Panc1 (cell line): ENCODE measurements at regions of chr17 and their contacts with region 1.

Region 1: DNA sequence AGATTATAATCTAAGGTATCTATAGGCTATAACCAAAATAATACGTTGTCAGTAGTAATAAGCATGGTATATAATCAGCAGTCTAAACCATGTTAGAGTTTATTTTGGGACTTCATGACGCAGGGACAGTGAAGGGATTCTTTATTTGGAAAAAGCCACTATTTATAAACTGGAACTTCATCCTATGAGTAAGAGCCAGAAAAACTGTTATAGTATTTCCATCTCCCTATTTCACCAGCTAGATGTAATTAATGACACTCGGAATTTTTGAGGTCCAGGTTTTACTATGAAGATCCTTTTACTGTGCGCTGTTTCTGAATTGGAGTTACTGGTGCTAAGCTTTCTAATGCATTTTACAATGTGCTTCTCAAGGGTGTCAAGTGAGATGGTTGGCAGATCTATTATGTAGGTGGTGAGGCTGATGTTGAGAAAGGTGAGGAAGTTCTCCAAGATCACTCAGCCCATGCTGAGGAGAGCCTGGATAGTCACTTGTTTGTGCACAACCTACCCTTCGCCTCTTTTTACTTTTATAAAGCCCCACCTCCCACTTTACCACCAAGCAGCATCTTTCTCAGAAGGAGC is 149.3 kb downstream of the MSI2 start:
- DNase-seq: no peak
- ATAC-seq: no peak
- H3K4me3 ChIP-seq: no peak overlapping the region
- H3K27ac ChIP-seq: no peak overlapping the region
- H3K4me1 ChIP-seq: peaks cover 6% of the 10 kb centered on the region; the same call in 1 of the 2 replicates
- H3K27me3 ChIP-seq: no peaks in the 10 kb centered on the region
- CTCF ChIP-seq: no peak

Region 2: DNA sequence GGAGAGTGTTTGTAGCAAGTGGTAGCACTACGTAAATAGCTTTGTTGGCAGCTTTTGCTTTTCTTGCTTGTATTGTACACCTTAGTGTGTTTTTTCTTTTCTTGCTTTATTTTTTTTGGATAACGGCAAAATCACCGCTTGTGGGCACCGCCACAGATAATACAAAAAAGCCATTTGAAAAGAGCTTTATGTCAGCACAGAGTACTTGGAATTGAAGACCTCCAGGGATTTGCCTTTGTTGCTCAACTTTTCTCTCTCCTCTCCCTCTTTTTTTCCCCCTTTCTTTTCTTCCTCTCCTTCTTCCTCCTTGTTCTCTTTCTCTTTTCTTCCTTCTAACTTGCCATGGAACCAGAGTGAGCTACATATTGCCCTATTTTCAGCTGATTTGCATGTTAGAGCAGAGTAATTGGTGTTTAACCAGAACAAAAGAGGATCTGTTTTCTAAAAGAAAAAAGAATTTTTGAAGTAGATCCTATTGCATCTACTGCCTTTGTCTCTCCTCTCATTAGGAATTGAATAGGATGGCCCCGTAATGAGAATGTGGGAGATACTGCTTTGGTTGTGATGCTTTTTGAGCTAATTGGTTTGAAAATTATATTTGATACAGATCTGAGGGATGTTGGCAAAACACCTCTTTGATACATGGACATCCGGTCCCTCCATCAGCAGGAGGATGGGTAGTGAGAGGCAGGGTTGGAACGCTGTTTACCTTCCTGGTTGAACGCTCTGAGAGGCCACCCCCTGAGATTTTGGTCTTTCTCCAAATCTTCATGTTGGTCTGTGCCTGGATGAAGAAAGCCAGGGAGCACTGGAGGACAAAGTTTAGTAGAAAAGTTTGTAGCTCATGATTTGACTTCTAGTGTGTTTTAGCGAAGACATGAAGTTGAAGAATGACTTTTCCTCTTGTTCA is 63.7 kb before region 1 on chr17:
- CTCF ChIA-PET with region 1: no interaction called
- POLR2A ChIA-PET with region 1: no interaction called
- in situ Hi-C with region 1: no loop called
- intact Hi-C with region 1: no loop called
- DNase-seq: no peak
- ATAC-seq: no peak
- H3K4me3 ChIP-seq: no peak overlapping the region
- H3K27ac ChIP-seq: no peak overlapping the region
- H3K4me1 ChIP-seq: no peaks in the 10 kb centered on the region
- H3K27me3 ChIP-seq: no peaks in the 10 kb centered on the region
- CTCF ChIP-seq: no peak

Region 3: DNA sequence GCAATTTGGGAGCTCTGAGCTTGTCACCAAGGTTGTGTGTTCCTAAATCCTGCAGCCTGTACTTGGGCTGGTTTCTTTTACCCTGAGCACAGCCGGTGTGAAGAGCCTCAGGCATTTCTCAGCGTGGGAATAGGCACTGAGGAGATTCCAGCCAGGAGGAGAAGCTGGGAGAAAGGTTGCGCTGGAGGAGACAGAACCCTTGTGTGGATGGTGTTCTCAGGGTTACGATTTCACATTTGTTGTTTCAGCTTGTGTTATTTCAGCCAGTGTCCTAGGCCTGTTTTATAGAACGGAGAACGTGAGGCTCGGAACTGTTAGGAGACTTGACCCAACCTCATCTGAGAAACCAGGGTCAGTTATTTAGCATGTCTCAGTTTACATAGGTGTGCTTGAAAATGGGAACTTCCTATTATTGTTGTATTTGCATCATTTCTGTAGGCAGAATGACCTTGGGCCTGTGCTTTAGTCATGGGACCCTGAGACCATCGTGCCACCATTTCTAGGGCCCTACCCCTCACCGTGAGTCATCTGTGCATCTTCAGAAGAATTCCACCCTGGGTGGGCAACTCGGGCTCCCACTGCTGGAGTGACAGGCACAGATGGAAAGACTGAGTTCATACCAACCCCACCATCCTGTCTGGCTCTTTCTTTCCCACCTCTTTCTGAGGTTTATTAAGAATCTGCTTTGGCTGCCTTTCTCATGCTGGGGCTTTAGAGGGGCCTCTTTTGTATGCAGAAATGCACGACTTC is 14.3 kb before region 1 on chr17:
- CTCF ChIA-PET with region 1: no interaction called
- POLR2A ChIA-PET with region 1: no interaction called
- in situ Hi-C with region 1: no loop called
- intact Hi-C with region 1: no loop called
- DNase-seq: no peak
- ATAC-seq: no peak
- H3K4me3 ChIP-seq: no peak overlapping the region
- H3K27ac ChIP-seq: no peak overlapping the region
- H3K4me1 ChIP-seq: no peaks in the 10 kb centered on the region
- H3K27me3 ChIP-seq: no peaks in the 10 kb centered on the region
- CTCF ChIP-seq: no peak

Region 4: DNA sequence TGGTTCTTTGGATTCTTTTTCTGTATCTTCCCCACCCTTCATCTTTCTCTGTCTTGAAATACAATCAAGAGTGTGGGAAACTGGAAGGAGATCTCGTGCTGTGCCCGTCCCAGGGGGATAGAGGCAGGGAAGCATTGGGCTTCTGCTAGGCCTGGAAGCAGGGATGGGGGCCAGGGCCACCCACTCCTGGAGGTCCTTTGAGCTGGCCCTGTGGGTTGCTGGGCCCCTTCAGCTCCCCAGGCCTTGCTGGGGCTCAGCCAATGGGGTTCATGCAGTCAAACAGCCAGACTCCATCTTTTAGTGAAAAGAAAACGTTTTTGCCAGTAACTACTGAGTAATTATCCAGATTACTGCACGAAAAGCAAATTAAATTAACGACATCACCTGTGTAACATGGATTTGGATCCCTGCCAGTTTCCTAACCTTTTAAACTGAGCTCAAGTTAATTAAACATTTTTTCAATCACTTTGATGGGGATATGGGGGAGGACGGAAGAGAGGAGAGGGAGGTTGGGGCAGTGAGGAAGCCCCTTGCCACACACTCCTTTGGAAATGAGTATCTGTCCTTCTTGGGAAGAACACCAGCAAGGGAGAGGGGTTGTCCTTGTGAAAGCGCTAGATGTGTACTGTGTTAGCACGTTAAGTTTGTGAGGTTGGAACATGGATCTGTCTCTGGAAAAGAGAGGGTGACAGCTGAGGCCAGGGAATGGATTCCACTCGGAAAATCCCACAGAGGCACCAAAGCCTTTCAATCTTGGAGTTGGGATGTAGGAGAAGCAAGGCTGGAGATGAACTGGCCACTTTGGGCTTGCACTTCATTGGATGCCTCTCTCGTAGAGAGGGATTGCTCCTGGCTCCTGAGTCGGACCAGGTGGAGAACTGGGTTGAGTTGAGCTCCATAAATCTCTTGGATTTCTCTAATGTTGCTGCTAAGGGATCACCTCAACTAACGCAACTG is 272.0 kb after region 1 on chr17:
- CTCF ChIA-PET with region 1: no interaction called
- POLR2A ChIA-PET with region 1: interaction called, 16 read pairs
- in situ Hi-C with region 1: no loop called
- intact Hi-C with region 1: no loop called
- DNase-seq: no peak
- ATAC-seq: no peak
- H3K4me3 ChIP-seq: no peak overlapping the region
- H3K27ac ChIP-seq: no peak overlapping the region
- H3K4me1 ChIP-seq: no peaks in the 10 kb centered on the region
- H3K27me3 ChIP-seq: no peaks in the 10 kb centered on the region
- CTCF ChIP-seq: no peak